Vagina (tissue), 2 donors: ENCODE measurements at regions of chr12 and their contacts with region 1.

Region 1: GRCh38 chr12:55736780-55737580 is 5.9 kb upstream of the GDF11 start:
- DNase-seq: no peak
- H3K4me3 ChIP-seq: no peak overlapping the region
- H3K27ac ChIP-seq: peak overlapping the region; percentile 85
- H3K4me1 ChIP-seq: peaks cover 19% of the 10 kb centered on the region
- H3K27me3 ChIP-seq: no peaks in the 10 kb centered on the region
- CTCF ChIP-seq: peak; percentile 29 to 57 (median 48)
- POLR2A ChIP-seq: no peak

Region 2: GRCh38 chr12:55940065-55940732 is 203.2 kb after region 1 on chr12:
- intact Hi-C with region 1: loop called (anchors 2 kb)
- DNase-seq: no peak
- H3K4me3 ChIP-seq: peak overlapping the region in 1 of 2 donors; percentile 11
- H3K27ac ChIP-seq: peak overlapping the region; percentile 55
- H3K4me1 ChIP-seq: peaks cover 25% of the 10 kb centered on the region
- H3K27me3 ChIP-seq: no peaks in the 10 kb centered on the region
- CTCF ChIP-seq: peak; percentile 72 to 90 (median 84)
- POLR2A ChIP-seq: no peak